MCF 10A (cell line): ENCODE measurements at regions of chrX and their contacts with region 1.

Region 1: GRCh38 chrX:31658360-31658759 is 586.5 kb upstream of the FTHL17 start:
- DNase-seq: peak; percentile 42
- H3K4me3 Mint-ChIP-seq: no peak overlapping the region
- H3K27ac Mint-ChIP-seq: no peak overlapping the region
- H3K4me1 Mint-ChIP-seq: no peaks in the 10 kb centered on the region
- H3K27me3 Mint-ChIP-seq: peaks cover 39% of the 10 kb centered on the region
- CTCF ChIP-seq: peak; percentile 42

Region 2: DNA sequence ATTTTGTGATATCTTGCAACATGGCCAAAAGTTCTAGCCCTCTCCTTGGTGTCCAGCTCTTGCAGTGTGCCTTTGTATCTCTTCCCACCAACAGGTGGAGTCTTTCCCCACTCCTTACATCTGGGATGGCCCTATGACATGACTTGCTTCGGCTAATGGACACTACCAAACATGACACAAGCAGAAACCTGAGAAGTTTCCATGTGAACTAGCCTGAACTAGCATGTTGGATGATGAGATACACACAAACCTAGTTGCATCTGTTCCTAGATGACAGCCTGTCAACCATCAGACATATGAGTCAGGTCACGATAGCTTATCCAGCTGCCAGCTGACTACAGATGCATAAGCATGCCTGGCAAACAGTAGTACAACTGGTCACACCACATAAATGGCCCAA is 379.0 kb before region 1 on chrX:
- CTCF ChIA-PET with region 1: interaction called, 14 read pairs
- POLR2A ChIA-PET with region 1: no interaction called
- intact Hi-C with region 1: loop called (anchors 1 kb)
- DNase-seq: peak; percentile 55
- H3K4me3 Mint-ChIP-seq: no peak overlapping the region
- H3K27ac Mint-ChIP-seq: no peak overlapping the region
- H3K4me1 Mint-ChIP-seq: no peaks in the 10 kb centered on the region
- H3K27me3 Mint-ChIP-seq: peaks cover 26% of the 10 kb centered on the region
- CTCF ChIP-seq: peak; percentile 34

Region 3: DNA sequence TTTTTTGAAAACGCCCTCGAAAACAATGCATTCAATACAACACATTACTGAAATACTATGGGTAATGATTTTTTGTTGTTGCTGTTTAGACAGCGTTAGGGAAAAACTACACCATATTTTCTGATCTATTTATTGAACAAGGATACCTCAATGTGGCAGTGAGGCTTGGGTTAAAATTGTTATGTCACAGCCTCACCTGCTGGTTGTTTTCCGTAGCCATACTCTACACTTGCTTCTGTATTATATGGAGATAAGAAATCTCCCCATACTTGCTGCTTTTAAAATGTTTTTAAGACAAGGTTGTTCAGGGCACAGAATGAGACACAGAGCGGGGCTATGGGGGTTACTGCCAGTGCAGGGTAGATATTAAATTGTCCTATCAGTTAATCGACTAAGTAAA is 365.0 kb before region 1 on chrX:
- CTCF ChIA-PET with region 1: interaction called, 10 read pairs
- POLR2A ChIA-PET with region 1: no interaction called
- intact Hi-C with region 1: no loop called
- DNase-seq: peak; percentile 4
- H3K4me3 Mint-ChIP-seq: no peak overlapping the region
- H3K27ac Mint-ChIP-seq: no peak overlapping the region
- H3K4me1 Mint-ChIP-seq: no peaks in the 10 kb centered on the region
- H3K27me3 Mint-ChIP-seq: peaks cover under 1% of the 10 kb centered on the region
- CTCF ChIP-seq: peak; percentile 12

Region 4: DNA sequence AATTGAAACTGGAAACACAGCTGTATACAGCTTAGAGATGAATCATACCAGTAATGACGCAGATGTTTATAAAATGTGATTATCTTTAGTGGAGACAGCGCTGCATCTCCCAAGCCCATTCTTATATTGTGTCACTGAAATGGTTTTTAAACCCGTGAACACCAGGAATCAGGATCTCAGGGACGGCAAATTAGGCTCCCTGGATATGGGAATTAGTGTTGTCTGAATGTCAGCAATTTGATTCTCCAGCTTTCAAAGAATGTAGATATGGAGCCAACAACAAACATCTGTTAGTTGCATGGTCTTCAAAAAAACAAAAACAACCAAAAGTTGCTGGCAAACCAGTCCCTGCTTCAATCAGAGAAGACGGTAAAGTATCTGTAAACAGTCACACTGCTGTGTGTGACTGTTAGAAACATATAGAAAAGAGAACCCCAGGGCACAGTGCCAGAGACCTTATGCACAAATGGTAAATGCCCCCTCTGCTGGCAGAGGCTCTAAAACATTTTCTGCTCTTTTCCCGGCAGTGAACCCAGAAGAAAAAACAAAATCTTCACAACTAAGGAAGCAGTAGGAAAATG is 234.7 kb before region 1 on chrX:
- CTCF ChIA-PET with region 1: no interaction called
- POLR2A ChIA-PET with region 1: interaction called, 4 read pairs
- intact Hi-C with region 1: loop called (anchors 1 kb)
- DNase-seq: peak; percentile 71
- H3K4me3 Mint-ChIP-seq: no peak overlapping the region
- H3K27ac Mint-ChIP-seq: no peak overlapping the region
- H3K4me1 Mint-ChIP-seq: peaks cover 8% of the 10 kb centered on the region
- H3K27me3 Mint-ChIP-seq: peaks cover 17% of the 10 kb centered on the region
- CTCF ChIP-seq: peak; percentile 31

Region 5: DNA sequence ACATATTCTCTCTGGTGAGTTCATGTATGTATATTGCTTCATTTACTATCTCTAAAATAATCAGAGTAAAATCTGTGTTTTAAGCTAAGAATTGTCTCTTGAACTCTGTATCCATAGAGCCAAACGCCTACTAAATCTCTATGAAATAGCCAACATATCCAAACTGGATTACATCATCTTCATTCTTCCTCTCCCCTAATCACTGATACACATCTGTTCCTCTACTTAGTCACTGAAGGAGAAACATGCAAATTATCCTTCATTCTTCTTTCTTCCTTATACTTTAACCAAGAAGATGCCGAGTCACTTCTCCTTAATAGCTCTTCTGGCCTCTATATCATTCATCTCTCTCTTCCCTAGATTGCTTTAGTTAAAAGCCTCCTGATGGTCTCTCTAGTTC is 43.9 kb after region 1 on chrX:
- CTCF ChIA-PET with region 1: no interaction called
- POLR2A ChIA-PET with region 1: no interaction called
- intact Hi-C with region 1: no loop called
- DNase-seq: no peak
- H3K4me3 Mint-ChIP-seq: no peak overlapping the region
- H3K27ac Mint-ChIP-seq: no peak overlapping the region
- H3K4me1 Mint-ChIP-seq: no peaks in the 10 kb centered on the region
- H3K27me3 Mint-ChIP-seq: peaks cover 92% of the 10 kb centered on the region
- CTCF ChIP-seq: no peak